CD8-positive, alpha-beta T cell (primary cell): ENCODE measurements at regions of chr20 and their contacts with region 1.

Region 1: DNA sequence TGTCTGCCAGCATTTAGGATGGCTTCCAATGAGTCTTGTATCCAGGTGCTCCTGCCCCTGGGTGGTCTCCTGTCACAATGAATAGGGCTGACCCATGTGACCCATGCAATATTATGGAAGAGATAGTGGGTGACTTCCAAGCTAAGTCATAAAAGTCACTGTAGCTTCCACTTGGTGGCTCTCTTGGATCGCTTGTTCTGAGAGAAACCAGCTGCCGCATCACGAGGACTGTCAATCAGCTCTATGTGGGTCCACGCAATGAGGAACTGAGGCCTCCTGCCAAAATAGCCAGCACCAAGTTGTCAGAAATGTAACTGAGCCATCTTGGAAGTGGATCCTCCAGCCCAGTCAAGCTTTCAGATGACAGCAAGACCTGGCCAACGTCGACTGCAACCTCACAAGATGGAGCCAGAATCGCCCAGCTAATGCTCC is 14.9 kb upstream of the MATN4 start:
- DNase-seq: peak in 1 of 9 experiments; percentile 26
- ATAC-seq: no peak
- H3K4me3 ChIP-seq: no peak overlapping the region
- H3K4me3 Mint-ChIP-seq: no peak overlapping the region
- H3K27ac ChIP-seq: no peak overlapping the region
- H3K27ac Mint-ChIP-seq: no peak overlapping the region
- H3K4me1 ChIP-seq: peaks cover 26% of the 10 kb centered on the region
- H3K4me1 Mint-ChIP-seq: peaks cover 17% of the 10 kb centered on the region
- H3K27me3 ChIP-seq: no peaks in the 10 kb centered on the region
- H3K27me3 Mint-ChIP-seq: no peaks in the 10 kb centered on the region
- CTCF ChIP-seq: no peak

Region 2: DNA sequence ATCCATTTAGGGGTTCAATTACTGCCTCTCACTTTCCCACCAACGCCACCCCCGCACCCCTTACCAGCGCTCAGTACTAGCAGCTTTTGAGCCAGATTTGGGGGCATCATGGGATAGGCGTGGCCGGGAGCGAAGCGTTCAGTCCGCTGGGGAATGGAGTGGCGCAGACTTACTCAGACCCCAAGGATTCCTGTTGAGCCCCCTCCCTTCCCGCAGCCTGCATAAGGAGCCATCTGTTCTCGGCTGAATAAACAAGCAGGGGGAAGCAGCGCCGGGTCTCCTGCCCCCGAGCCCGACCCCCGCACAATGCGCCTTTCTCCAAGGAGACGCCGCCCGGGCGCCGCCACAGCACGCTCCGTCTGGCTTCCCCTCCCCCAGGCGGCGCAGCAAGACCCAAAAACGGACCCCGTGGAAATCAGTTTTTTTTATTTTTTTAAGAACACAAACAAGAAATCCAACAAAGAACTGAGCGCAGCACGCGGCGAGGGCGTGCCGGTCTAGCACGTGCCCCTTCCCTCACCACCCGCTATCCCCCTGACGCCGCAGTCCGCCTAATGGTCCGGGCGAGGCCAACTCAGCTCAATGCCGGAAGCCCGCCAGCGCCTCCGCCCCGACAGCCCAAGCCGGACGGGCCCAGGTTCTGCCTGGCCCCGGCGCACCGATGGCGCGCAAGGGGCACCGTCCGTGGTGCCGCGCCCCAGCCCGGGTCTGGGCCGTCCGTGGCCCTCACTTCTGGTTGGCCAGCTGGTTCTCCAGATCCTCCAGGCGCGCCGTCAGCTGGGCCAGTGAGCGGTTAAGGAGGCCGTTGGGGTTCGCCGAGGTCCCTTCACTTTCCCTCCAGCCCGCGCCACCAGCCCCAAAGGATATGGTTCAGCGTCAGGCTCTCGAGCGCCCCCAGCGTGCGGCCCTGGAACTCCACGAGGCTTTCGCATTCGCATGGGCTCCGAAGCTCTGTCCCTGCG is 29.6 kb before region 1 on chr20:
- CTCF ChIA-PET with region 1: interaction called, 11 read pairs
- POLR2A ChIA-PET with region 1: no interaction called
- intact Hi-C with region 1: no loop called
- DNase-seq: peak; percentile 66 to 84 (median 80)
- ATAC-seq: peak; percentile 91
- H3K4me3 ChIP-seq: peak overlapping the region; percentile 39 to 76
- H3K4me3 Mint-ChIP-seq: peak overlapping the region; percentile 80
- H3K27ac ChIP-seq: no peak overlapping the region
- H3K27ac Mint-ChIP-seq: no peak overlapping the region
- H3K4me1 ChIP-seq: no peaks in the 10 kb centered on the region
- H3K4me1 Mint-ChIP-seq: peaks cover 13% of the 10 kb centered on the region
- H3K27me3 ChIP-seq: peaks cover 7 to 8% of the 10 kb centered on the region in 2 experiments
- H3K27me3 Mint-ChIP-seq: peaks cover 45% of the 10 kb centered on the region
- CTCF ChIP-seq: peak; percentile 90

Region 3: DNA sequence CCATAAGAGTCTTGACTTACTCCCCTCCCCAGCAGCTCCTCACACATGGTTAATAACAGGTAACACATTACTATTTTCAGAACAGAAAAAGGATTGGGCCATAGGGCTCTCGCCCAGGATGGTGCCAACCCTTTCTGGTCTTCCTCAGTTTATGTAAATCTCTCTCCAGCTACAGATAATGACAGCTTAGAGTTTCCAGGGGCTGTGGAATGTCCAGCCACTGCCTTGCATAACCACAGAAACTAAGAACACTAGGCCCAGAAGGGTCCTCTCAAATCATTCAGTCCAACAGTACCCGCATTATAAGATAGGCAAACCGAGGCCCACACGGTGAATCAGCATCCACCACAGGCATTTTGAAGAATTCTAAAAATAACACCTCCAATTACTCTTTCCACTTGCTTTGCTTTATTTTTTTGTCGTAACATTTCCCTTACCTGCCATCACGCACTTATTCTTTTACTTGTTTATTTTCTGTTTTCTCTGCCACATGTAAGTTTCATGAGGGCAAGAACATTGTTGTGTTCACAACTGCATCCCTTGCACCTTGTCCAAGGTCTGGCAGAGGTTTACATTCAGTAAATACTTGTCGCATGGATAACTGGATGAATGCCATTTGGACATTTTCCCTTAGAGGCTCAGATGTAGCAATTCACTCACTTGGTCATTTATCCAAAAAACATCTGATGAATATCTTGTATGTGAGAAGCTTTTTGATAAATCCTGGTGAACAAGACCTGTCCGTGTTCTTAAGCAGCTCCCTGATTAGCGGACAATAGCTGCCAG is 31.6 kb after region 1 on chr20:
- CTCF ChIA-PET with region 1: interaction called, 3 read pairs
- POLR2A ChIA-PET with region 1: no interaction called
- intact Hi-C with region 1: loop called in 1 of 2 experiments (anchors 5 kb)
- DNase-seq: no peak
- ATAC-seq: no peak
- H3K4me3 ChIP-seq: no peak overlapping the region
- H3K4me3 Mint-ChIP-seq: no peak overlapping the region
- H3K27ac ChIP-seq: no peak overlapping the region
- H3K27ac Mint-ChIP-seq: no peak overlapping the region
- H3K4me1 ChIP-seq: no peaks in the 10 kb centered on the region
- H3K4me1 Mint-ChIP-seq: peaks cover 5% of the 10 kb centered on the region
- H3K27me3 ChIP-seq: no peaks in the 10 kb centered on the region
- H3K27me3 Mint-ChIP-seq: no peaks in the 10 kb centered on the region
- CTCF ChIP-seq: no peak

Region 4: DNA sequence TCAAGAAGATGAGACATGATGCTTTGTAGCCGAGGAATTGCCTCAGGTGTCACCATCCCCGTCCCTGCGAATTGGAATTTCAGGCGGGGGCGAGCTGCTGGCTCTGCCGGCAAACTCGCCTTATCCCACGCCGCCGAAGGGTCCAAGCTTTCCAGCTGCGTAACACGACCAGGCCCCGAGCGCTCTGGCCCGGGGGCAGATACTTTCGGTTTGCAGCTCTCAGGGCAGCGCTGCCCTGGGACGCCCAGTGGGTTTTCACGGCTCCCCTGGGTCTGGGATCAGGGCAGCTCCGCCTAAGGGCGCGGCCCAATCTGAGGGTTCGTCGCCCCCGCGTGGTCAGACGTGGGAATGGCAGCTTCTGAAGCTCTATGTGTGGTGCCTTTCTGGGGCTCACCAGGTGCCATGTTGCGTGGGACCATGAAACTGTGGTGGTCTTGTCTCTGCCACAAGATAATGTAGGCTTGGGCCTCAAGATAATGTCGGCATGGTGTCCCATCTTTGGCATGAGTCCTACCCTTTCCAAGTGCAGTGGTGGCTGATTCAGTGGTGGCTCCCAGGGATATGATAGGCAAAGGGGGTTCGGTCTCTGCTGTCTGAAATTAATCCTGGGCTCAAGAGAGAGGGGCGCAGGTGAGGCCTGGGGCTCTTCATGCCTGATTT is 113.9 kb after region 1 on chr20:
- CTCF ChIA-PET with region 1: interaction called, 75 read pairs
- POLR2A ChIA-PET with region 1: no interaction called
- intact Hi-C with region 1: loop called (anchors 1 to 2 kb)
- DNase-seq: peak; percentile 67 to 94 (median 90)
- ATAC-seq: peak; percentile 99
- H3K4me3 ChIP-seq: peak overlapping the region; percentile 56 to 60
- H3K4me3 Mint-ChIP-seq: peak overlapping the region; percentile 80
- H3K27ac ChIP-seq: peak overlapping the region in 1 of 2 experiments; percentile 53
- H3K27ac Mint-ChIP-seq: peak overlapping the region; percentile 32
- H3K4me1 ChIP-seq: peaks cover 15% of the 10 kb centered on the region
- H3K4me1 Mint-ChIP-seq: peaks cover 16% of the 10 kb centered on the region
- H3K27me3 ChIP-seq: no peaks in the 10 kb centered on the region
- H3K27me3 Mint-ChIP-seq: no peaks in the 10 kb centered on the region
- CTCF ChIP-seq: peak; percentile 84

Region 5: GRCh38 chr20:45765980-45766379 is 443.0 kb after region 1 on chr20:
- CTCF ChIA-PET with region 1: interaction called, 168 read pairs
- POLR2A ChIA-PET with region 1: no interaction called
- intact Hi-C with region 1: loop called in 1 of 2 experiments (anchors 1 kb)
- DNase-seq: no peak
- ATAC-seq: no peak
- H3K4me3 ChIP-seq: no peak overlapping the region
- H3K4me3 Mint-ChIP-seq: no peak overlapping the region
- H3K27ac ChIP-seq: no peak overlapping the region
- H3K27ac Mint-ChIP-seq: no peak overlapping the region
- H3K4me1 ChIP-seq: peaks cover 3% of the 10 kb centered on the region
- H3K4me1 Mint-ChIP-seq: peaks cover 5% of the 10 kb centered on the region
- H3K27me3 ChIP-seq: no peaks in the 10 kb centered on the region
- H3K27me3 Mint-ChIP-seq: peaks cover 3% of the 10 kb centered on the region
- CTCF ChIP-seq: no peak

Region 6: DNA sequence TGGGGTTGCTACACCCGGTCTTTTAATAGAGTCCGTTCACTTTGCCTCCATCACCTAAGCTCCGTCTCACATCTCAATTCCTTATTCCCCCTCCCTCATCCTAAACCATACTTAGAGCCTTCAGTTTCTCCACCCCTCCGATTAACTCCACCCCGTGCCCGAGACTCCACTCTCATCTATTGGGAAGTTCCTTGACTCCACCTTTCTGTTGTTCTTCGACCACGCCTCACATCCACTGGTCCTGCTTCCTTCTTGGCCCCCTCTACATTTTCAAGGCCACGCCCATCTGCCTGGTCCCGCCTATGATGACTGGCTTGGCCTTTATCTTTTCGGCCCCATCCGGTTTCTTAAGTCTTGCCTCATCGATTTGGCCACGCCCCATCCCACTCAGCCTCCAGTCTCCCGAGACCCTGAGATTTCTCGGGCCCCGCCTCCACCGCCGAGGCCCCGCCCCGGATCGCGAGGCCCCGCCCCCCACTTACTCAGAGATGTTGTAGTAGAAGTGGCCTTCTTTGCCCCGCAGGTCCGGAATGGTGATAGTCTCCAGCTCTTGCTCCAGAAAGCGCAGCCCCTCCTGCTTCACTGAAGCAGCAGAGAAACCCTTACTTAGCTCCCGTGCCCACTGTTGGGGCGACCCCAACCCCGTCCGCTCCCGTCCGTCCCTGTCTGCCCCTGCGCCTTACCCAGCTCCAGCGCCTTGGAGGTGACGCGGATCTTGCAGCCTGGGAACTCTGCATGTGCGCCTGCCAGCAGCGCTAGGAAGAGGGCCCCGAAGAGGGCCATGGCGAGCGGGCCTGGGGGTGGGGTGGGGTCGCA is 587.9 kb after region 1 on chr20:
- CTCF ChIA-PET with region 1: no interaction called
- POLR2A ChIA-PET with region 1: no interaction called
- intact Hi-C with region 1: no loop called
- DNase-seq: peak; percentile 78 to 93 (median 88)
- ATAC-seq: peak; percentile 95
- H3K4me3 ChIP-seq: peak overlapping the region; percentile 53 to 75
- H3K4me3 Mint-ChIP-seq: peak overlapping the region; percentile 89
- H3K27ac ChIP-seq: no peak overlapping the region
- H3K27ac Mint-ChIP-seq: peak overlapping the region; percentile 14
- H3K4me1 ChIP-seq: peaks cover 17% of the 10 kb centered on the region
- H3K4me1 Mint-ChIP-seq: peaks cover 16% of the 10 kb centered on the region
- H3K27me3 ChIP-seq: peaks cover 0 to 5% of the 10 kb centered on the region in 2 experiments
- H3K27me3 Mint-ChIP-seq: peaks cover 15% of the 10 kb centered on the region
- CTCF ChIP-seq: no peak